Activated naive CD4-positive, alpha-beta T cell treated with anti-CD3 and anti-CD28 coated beads for 36 hours (primary cell): ENCODE measurements at regions of chr6 and their contacts with region 1.

Region 1: GRCh38 chr6:39114704-39115599 is at the start of gene SAYSD1:
- DNase-seq: peak; percentile 94
- H3K4me3 Mint-ChIP-seq: peak within 1 kb of the TSS; percentile 93
- H3K27ac Mint-ChIP-seq: peak within 1 kb of the TSS; percentile 95
- H3K4me1 Mint-ChIP-seq: peaks cover 56% of the 10 kb centered on the region
- H3K27me3 Mint-ChIP-seq: no peaks in the 10 kb centered on the region
- total RNA-seq, gene SAYSD1: 13.7 to 13.8 TPM

Region 2: DNA sequence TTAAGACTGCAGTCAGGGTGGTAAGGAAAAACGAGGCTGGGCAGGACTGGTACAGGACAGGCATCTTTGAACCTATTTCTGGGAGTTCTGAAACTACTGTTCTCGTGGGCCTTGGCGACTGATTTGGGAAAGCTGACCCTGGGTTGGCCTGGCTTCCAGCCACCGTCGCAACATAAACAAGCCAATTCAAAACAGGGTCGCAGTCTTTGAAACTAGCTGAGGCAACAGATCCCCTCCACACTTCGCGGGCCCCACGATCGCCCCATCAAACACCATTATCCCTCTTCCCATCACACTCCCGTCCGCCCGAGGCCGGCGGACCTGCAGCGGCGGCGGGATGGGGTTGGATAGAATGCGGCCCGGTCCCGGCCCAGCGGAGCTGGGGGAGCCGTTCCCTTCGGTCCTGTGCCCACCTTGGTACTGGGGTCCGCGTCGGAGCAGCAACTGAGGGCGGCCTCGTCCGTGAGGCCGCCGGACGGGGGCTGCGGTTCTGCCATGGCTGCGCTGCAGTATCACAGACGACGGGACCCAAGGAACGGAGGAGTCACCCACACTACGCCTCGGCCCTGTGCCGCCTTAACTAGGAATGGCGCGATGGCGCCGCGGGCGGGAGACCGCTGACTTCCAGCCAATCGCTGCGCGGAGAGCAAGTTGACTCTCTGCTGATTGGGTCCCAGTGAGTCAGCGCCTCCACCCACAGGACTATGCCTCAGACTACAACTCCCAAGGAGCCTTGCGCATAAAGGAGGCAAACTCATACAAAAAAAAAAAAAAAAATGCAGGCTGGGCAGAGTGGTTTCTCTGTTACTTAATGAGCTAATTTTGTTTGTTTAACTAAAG is 412.2 kb before region 1 on chr6 and contains the start of gene GLO1:
- CTCF ChIA-PET with region 1: no interaction called
- intact Hi-C with region 1: loop called (anchors 2 kb)
- DNase-seq: peak; percentile 98
- H3K4me3 Mint-ChIP-seq: peak within 1 kb of the TSS; percentile 99
- H3K27ac Mint-ChIP-seq: peak within 1 kb of the TSS; percentile 97
- H3K4me1 Mint-ChIP-seq: peaks cover 37% of the 10 kb centered on the region
- H3K27me3 Mint-ChIP-seq: peaks cover 8% of the 10 kb centered on the region
- total RNA-seq, gene GLO1: 137 to 144 TPM

Region 3: DNA sequence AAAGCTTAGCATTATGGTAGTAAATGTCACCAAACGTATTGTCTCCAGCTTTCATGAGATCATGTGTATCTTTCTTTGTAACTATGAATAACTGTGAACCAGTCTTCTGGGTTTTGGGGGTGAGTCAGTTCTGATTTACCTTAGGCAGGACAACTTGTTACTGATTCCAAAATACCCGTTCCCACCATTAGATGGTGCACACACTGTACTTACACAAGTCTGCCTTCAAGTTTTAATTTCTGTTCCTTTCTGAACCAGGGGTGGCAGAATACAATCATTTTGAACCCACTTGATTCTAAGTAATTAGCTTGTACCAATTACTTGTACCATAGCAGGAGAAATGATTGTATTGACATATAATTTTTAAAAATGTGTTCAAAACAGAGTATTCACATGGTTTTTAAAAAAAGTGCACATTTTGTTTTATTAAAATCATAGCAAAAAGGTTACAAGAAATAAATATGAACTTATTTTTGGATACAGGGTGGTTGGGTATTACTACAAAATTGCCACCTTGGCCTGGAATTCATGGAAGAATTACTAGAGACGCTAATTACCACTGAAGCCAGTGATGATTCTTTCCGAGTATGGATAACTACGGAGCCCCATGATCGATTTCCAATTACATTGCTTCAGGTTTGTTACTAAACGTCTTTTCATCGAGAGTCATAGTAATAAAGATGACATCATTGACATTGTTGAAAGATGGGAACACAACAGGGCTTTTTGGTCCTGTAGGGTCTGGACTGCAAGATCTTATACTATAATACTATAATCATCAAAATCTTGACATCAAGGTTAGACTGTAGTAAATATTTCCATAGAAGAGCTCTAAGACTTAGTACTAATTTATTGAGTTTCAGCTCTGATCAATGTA is 141.5 kb before region 1 on chr6:
- CTCF ChIA-PET with region 1: no interaction called
- intact Hi-C with region 1: loop called (anchors 2 kb)
- DNase-seq: peak; percentile 60
- H3K4me3 Mint-ChIP-seq: no peak overlapping the region
- H3K27ac Mint-ChIP-seq: no peak overlapping the region
- H3K4me1 Mint-ChIP-seq: no peaks in the 10 kb centered on the region
- H3K27me3 Mint-ChIP-seq: no peaks in the 10 kb centered on the region

Region 4: DNA sequence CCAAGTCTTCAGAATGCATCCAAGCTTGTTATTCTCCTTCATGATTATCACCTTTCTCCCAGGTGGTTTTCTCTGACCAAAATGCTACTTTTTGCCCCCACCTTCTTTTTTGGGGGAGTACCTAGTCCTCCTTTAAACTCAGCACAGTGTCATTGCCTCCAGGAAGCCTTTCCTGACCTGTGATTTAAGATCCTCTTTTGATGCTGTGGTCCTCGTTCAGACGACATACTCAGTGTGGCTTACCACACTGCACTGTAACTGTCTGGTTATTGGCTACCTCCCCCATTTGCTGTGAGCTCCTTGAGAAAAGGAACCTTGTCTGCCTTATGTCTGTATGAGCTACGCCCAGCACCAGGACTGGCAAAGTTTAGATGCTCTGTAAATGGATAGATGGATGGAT is 14.6 kb before region 1 on chr6:
- CTCF ChIA-PET with region 1: interaction called, 8 read pairs
- intact Hi-C with region 1: loop called (anchors 1 kb)
- DNase-seq: peak; percentile 47
- H3K4me3 Mint-ChIP-seq: no peak overlapping the region
- H3K27ac Mint-ChIP-seq: no peak overlapping the region
- H3K4me1 Mint-ChIP-seq: peaks cover 18% of the 10 kb centered on the region
- H3K27me3 Mint-ChIP-seq: no peaks in the 10 kb centered on the region

Region 5: DNA sequence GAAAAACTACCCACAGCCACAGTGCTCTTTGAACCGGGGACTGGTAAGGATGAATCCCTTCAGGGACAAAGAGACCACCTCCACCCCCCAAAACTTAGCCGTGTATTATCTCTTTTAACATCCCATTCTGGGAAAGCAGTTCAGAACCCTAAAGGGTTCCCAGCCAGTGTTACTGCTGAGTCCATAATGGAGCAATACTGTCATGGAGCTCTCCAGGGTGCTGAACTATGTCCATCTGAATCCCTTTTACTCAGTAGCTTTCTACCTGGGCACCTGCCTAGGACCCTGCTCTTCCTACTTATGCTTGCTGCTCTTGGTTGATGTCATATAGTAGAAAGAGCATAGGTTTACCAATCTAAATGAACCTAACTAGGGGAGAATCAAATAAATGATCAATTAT is 22.3 kb after region 1 on chr6:
- CTCF ChIA-PET with region 1: no interaction called
- intact Hi-C with region 1: no loop called
- DNase-seq: peak; percentile 67
- H3K4me3 Mint-ChIP-seq: no peak overlapping the region
- H3K27ac Mint-ChIP-seq: no peak overlapping the region
- H3K4me1 Mint-ChIP-seq: no peaks in the 10 kb centered on the region
- H3K27me3 Mint-ChIP-seq: peaks cover 12% of the 10 kb centered on the region

Region 6: GRCh38 chr6:39153766-39154397 is 38.9 kb after region 1 on chr6:
- CTCF ChIA-PET with region 1: interaction called, 10 read pairs
- intact Hi-C with region 1: loop called (anchors 1 kb)
- DNase-seq: peak; percentile 59
- H3K4me3 Mint-ChIP-seq: no peak overlapping the region
- H3K27ac Mint-ChIP-seq: peak overlapping the region; percentile 44
- H3K4me1 Mint-ChIP-seq: peaks cover 29% of the 10 kb centered on the region
- H3K27me3 Mint-ChIP-seq: peaks cover 3% of the 10 kb centered on the region

Region 7: GRCh38 chr6:39228992-39229767 is 114.2 kb after region 1 on chr6 and contains the start of gene KCNK5:
- CTCF ChIA-PET with region 1: no interaction called
- intact Hi-C with region 1: loop called (anchors 1 kb)
- DNase-seq: peak; percentile 89
- H3K4me3 Mint-ChIP-seq: peak within 1 kb of the TSS; percentile 87
- H3K27ac Mint-ChIP-seq: peak within 1 kb of the TSS; percentile 87
- H3K4me1 Mint-ChIP-seq: peaks cover 44% of the 10 kb centered on the region
- H3K27me3 Mint-ChIP-seq: peaks cover 1% of the 10 kb centered on the region
- total RNA-seq, gene KCNK5: 9.0 to 9.2 TPM